Activated T-helper 2 cell treated with anti-CD3 and anti-CD28 coated beads, Interferon-gamma antibody, Interleukin-2, Interleukin-4, amounts not matched to agents 10 μg/mL and 5 μg/mL and 100 μg/mL, durations not matched to agents 14 hours and 24 hours and 36 hours (primary cell): ENCODE measurements at regions of chr12 and their contacts with region 1.

Region 1: GRCh38 chr12:53625946-53626701 is at the start of gene ATF7:
- DNase-seq: peak; percentile 97
- H3K4me3 Mint-ChIP-seq: peak within 1 kb of the TSS; percentile 100
- H3K27ac Mint-ChIP-seq: peak within 1 kb of the TSS; percentile 79
- H3K4me1 Mint-ChIP-seq: peaks cover 35% of the 10 kb centered on the region
- H3K27me3 Mint-ChIP-seq: peaks cover 2% of the 10 kb centered on the region
- total RNA-seq, gene ATF7: 28.0 and 32.0 TPM in 2 replicates

Region 2: DNA sequence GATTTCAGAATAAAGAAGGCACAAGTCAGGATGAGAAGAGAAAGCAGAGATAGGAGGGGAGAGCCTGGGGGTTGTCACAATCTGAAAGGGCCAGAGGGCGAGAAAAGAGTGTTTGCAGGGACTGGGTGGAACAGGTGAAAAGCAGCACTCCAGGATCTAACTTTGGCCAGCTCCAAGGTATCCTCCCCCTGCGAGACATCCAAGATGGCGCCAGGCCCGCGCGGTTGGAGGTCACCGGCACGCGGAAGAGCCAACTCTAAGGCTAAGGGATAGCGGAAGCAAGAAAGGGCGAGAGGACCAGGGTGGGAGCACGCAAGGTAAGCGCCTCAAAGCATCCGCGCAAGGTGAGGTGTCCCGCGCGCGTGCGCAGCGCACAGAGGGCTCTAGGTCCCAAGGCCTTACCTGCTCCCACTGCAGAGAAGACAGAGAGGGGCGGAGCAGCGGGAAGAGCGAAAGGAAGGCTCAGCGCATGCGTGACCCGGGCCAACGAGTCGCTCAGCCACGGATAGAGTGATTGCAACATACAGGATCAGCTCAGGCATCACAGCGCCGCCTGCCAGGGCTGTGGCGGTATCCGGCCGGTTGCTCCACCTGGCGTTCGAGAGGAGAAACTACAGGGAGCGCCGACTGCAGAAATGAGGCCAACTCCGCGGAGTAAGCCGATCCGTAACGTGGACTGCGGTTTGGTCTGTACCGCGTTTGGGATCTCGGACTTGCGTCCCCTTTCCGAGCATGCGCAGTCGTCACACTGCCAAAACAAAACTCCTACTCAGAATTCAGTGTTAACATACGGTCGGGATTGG is 49.7 kb after region 1 on chr12 and contains the start of gene ATP5MC2:
- intact Hi-C with region 1: loop called (anchors 1 kb)
- DNase-seq: peak; percentile 97
- H3K4me3 Mint-ChIP-seq: peak within 1 kb of the TSS; percentile 93
- H3K27ac Mint-ChIP-seq: peak within 1 kb of the TSS; percentile 92
- H3K4me1 Mint-ChIP-seq: peaks cover 28% of the 10 kb centered on the region
- H3K27me3 Mint-ChIP-seq: peaks cover 29% of the 10 kb centered on the region
- total RNA-seq, gene ATP5MC2: 433 and 438 TPM in 2 replicates